Activated T-helper 2 cell treated with anti-CD3 and anti-CD28 coated beads, Interferon-gamma antibody, Interleukin-2, Interleukin-4, amounts not matched to agents 10 μg/mL and 5 μg/mL and 100 μg/mL, durations not matched to agents 14 hours and 24 hours and 36 hours (primary cell): ENCODE measurements at regions of chr19 and their contacts with region 1.

Region 1: GRCh38 chr19:41457241-41457640 is 14.3 kb downstream of the ERICH4 start:
- DNase-seq: peak; percentile 24
- H3K4me3 Mint-ChIP-seq: no peak overlapping the region
- H3K27ac Mint-ChIP-seq: peak overlapping the region; percentile 67
- H3K4me1 Mint-ChIP-seq: peaks cover 43% of the 10 kb centered on the region
- H3K27me3 Mint-ChIP-seq: peaks cover 17% of the 10 kb centered on the region

Region 2: GRCh38 chr19:41420101-41420880 is 37.0 kb before region 1 on chr19:
- intact Hi-C with region 1: no loop called
- DNase-seq: no peak
- H3K4me3 Mint-ChIP-seq: no peak overlapping the region
- H3K27ac Mint-ChIP-seq: no peak overlapping the region
- H3K4me1 Mint-ChIP-seq: no peaks in the 10 kb centered on the region
- H3K27me3 Mint-ChIP-seq: no peaks in the 10 kb centered on the region

Region 3: GRCh38 chr19:41484822-41485221 is 27.6 kb after region 1 on chr19:
- intact Hi-C with region 1: loop called (anchors 2 kb)
- DNase-seq: no peak
- H3K4me3 Mint-ChIP-seq: no peak overlapping the region
- H3K27ac Mint-ChIP-seq: no peak overlapping the region
- H3K4me1 Mint-ChIP-seq: no peaks in the 10 kb centered on the region
- H3K27me3 Mint-ChIP-seq: peaks cover 37% of the 10 kb centered on the region